ENCODE measurements at regions of chr2 and their contacts with region 1.

Region 1: DNA sequence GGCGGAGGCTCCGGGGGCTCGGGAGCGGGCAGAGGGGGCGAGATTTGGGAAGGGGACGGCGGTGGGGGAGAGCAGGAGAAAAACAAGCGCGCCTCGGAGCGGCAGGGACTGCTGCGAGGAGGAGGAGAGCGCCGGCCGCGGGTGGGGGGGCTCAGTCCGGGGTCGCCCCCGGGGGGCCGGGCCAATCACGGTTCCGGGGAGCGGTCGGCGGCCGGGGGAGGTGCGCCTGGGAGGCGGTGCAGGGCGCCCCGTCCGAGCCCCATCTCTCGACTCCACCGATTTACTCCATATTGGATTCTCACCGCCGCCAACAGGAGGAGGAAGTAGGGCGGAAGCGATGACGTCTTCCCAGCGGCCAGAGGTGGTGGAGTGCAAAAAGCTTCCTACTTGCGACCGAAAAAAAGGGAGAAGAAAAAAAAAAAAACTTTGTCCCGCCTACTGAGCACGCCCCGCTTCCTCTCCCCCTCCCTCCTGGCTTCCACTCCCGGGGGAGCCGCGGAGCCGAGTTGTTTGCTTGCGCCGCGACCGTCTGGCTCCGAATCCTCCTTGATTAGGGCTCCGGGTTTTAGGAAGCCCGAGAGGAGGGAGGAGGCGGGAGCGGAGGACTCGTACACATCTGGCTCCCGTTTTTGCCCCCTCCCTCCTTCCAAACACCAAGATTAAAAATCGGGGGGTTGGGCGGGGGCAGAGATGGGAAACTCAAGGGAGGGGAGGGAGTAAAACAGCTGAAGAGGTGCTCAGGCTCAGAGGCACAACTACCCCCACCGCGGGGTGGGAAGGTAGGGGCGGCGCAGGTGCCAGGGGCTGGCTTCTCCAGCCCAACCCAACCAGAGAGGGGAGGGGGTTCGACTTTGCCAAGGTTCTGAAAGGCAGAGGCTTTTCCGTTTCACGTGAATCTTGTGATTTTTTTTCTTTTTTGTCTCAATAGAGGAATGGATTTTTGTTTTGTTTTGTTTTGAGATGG is at the start of gene SPRED2:
- DNase-seq: peak in 13 of 14 experiments; percentile 36 to 89 (median 60)
- ATAC-seq: peak; percentile 47
- H3K4me3 ChIP-seq: peak within 1 kb of the TSS; percentile 75
- H3K4me3 Mint-ChIP-seq: peak within 1 kb of the TSS; percentile 94
- H3K27ac ChIP-seq: no peak within 1 kb of the TSS
- H3K27ac Mint-ChIP-seq: peak within 1 kb of the TSS; percentile 42
- H3K4me1 ChIP-seq: peaks cover 49% of the 10 kb centered on the region
- H3K4me1 Mint-ChIP-seq: peaks cover 23% of the 10 kb centered on the region
- H3K27me3 ChIP-seq: peaks cover 29 to 34% of the 10 kb centered on the region in 2 experiments
- H3K27me3 Mint-ChIP-seq: peaks cover 57% of the 10 kb centered on the region
- CTCF ChIP-seq: no peak
- total RNA-seq, gene SPRED2: 2.5 to 2.8 TPM

Region 2: DNA sequence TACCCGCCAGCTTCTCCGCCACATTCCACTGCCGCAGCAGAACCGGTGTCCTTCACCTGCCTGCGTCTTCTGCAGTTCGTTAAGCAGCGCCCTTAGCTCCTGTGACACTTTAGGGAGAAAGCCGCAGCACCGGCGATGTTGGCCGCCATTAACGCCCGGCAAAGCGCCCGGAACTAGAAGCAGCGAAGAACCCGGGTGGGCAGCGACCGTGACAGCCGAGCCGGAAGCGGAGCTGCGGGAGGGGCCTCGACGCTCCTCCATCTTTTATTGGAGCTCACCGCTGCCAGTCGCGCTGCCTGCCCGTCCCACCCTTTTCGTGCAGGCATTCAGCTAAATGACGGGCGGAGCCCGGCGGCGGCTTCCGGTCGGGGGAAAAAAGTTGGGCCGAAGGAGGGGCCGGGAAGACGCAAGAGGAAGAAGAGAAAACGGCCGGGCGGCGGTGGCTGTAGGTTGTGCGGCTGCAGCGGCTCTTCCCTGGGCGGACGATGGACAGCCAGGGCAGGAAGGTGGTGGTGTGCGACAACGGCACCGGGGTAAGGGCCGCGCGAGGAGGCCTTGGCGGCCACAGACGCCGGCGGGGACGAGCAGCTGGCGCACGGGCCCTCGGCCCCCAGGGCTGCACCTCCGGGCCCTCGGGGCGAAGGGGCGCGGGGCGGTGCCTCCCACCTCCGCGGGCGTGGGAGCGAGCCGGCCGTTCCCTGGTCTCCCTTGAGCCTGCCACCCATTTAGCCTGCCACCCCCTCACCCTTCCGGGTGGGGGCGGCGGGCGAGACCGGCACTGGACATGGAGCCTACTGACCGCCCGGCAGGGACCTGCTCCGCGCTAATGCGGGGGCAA is 204.9 kb before region 1 on chr2 and contains the start of gene ACTR2:
- CTCF ChIA-PET with region 1: no interaction called
- POLR2A ChIA-PET with region 1: interaction called, 7 read pairs
- intact Hi-C with region 1: loop called in 1 of 2 experiments (anchors 10 kb)
- DNase-seq: peak; percentile 87 to 98 (median 92)
- ATAC-seq: peak; percentile 93
- H3K4me3 ChIP-seq: peak within 1 kb of the TSS; percentile 76
- H3K4me3 Mint-ChIP-seq: peak within 1 kb of the TSS; percentile 100
- H3K27ac ChIP-seq: peak within 1 kb of the TSS; percentile 97 to 98
- H3K27ac Mint-ChIP-seq: peak within 1 kb of the TSS; percentile 98
- H3K4me1 ChIP-seq: peaks cover 35% of the 10 kb centered on the region
- H3K4me1 Mint-ChIP-seq: peaks cover 53% of the 10 kb centered on the region
- H3K27me3 ChIP-seq: no peaks in the 10 kb centered on the region
- H3K27me3 Mint-ChIP-seq: no peaks in the 10 kb centered on the region
- CTCF ChIP-seq: no peak
- total RNA-seq, gene ACTR2: 128 to 130 TPM

Region 3: GRCh38 chr2:65300761-65301711 is 131.5 kb before region 1 on chr2:
- CTCF ChIA-PET with region 1: no interaction called
- POLR2A ChIA-PET with region 1: interaction called, 6 read pairs
- intact Hi-C with region 1: loop called (anchors 2 kb)
- DNase-seq: peak; percentile 40 to 80 (median 70)
- ATAC-seq: peak; percentile 93
- H3K4me3 ChIP-seq: peak overlapping the region; percentile 49
- H3K4me3 Mint-ChIP-seq: peak overlapping the region; percentile 85
- H3K27ac ChIP-seq: peak overlapping the region; percentile 21 to 52
- H3K27ac Mint-ChIP-seq: peak overlapping the region; percentile 90
- H3K4me1 ChIP-seq: peaks cover 27% of the 10 kb centered on the region
- H3K4me1 Mint-ChIP-seq: peaks cover 44% of the 10 kb centered on the region
- H3K27me3 ChIP-seq: no peaks in the 10 kb centered on the region
- H3K27me3 Mint-ChIP-seq: no peaks in the 10 kb centered on the region
- CTCF ChIP-seq: no peak

Region 4: DNA sequence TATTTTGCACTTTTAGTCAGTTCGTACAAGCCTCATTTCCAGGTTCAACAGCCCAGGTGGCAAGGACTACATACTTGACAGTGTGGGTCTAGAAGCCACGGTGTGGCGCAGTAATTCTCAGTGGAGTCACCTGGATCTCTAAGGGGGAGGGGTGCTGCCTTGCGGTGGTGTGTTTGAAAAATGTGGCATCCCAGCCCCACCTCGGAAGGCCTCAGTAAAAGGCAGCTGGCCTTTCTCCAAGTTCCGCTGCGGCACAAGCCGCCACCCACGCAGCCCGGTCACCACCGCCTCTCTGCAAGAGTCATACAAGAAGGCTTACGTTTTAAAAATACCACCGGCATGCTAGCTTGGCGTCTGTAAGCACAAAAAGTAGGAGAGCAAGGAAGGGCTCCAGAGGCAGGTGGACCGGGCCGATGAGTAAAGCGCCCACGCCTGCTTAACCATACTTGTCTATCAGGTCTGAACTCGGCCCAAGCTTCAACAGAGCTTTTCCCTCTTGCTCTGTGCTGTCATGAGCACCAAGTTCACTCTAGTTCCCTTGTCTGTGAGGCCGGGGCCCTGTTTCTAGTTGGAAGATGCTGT is 49.6 kb before region 1 on chr2:
- CTCF ChIA-PET with region 1: no interaction called
- POLR2A ChIA-PET with region 1: interaction called, 5 read pairs
- intact Hi-C with region 1: loop called in 1 of 2 experiments (anchors 2 kb)
- DNase-seq: peak; percentile 38 to 87 (median 64)
- ATAC-seq: peak; percentile 92
- H3K4me3 ChIP-seq: peak overlapping the region; percentile 20
- H3K4me3 Mint-ChIP-seq: peak overlapping the region; percentile 77
- H3K27ac ChIP-seq: no peak overlapping the region
- H3K27ac Mint-ChIP-seq: peak overlapping the region; percentile 82
- H3K4me1 ChIP-seq: peaks cover 25% of the 10 kb centered on the region
- H3K4me1 Mint-ChIP-seq: peaks cover 22% of the 10 kb centered on the region
- H3K27me3 ChIP-seq: no peaks in the 10 kb centered on the region
- H3K27me3 Mint-ChIP-seq: no peaks in the 10 kb centered on the region
- CTCF ChIP-seq: peak; percentile 39

Region 5: DNA sequence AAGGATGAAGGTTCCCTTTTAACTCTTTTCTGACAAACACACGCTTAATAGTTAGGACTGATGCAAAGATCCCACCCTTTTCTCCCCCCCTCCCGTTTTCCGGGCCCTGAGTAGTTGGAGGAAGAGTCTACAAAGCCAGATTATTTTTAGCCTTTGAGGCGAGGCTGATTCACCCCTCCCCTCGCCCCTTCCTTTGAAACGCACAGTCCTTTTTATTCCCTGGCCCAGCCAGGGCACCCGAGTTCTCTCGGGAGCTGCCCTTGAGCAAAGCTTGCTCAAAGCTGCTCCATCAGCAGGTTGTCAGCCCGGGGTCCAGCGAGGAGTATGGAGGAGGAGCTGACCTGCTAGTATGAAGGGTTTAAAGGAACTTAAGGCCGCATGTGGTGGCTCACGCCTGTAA is 47.0 kb after region 1 on chr2:
- CTCF ChIA-PET with region 1: no interaction called
- POLR2A ChIA-PET with region 1: no interaction called
- intact Hi-C with region 1: no loop called
- DNase-seq: no peak
- ATAC-seq: no peak
- H3K4me3 ChIP-seq: no peak overlapping the region
- H3K4me3 Mint-ChIP-seq: no peak overlapping the region
- H3K27ac ChIP-seq: no peak overlapping the region
- H3K27ac Mint-ChIP-seq: no peak overlapping the region
- H3K4me1 ChIP-seq: no peaks in the 10 kb centered on the region
- H3K4me1 Mint-ChIP-seq: no peaks in the 10 kb centered on the region
- H3K27me3 ChIP-seq: peaks cover 0 to 3% of the 10 kb centered on the region in 2 experiments
- H3K27me3 Mint-ChIP-seq: peaks cover 16% of the 10 kb centered on the region
- CTCF ChIP-seq: no peak